ENCODE measurements at regions of chr20 and their contacts with region 1.

Region 1: DNA sequence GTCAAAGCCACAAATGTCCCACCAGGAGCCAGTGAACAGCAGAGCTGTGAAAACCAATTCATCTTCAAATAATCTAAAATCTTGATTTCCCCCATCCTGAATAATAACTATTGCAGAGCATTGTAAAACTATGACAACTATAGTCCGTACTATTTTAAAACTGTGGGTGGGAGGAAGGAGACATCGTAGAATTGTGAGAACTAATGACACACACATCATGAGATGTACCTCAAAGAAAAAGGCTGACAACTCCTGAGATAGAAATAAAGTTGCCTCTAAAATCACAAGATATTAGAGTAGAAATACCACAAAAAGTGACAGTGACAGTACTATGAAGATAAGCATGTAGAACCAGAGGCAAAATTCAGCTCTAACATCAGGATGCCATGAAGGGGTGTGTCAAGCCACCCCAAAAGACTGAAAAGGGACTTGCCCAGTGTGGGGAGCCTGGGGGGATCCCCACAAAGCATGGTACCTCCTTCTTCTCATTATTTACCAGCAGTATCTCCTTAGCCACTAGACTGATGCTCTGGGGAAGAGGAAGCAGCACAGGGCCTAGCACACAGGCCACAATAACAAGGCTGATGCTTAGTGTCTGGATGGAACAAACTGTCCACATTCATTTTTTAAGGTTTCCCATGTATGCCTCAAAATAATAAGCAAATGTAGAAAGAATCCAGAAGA is 13.4 kb downstream of the NAPB start:
- DNase-seq: no peak
- ATAC-seq: no peak
- H3K4me3 ChIP-seq: no peak overlapping the region
- H3K27ac ChIP-seq: no peak overlapping the region
- H3K4me1 ChIP-seq: peaks cover 58% of the 10 kb centered on the region
- H3K27me3 ChIP-seq: no peaks in the 10 kb centered on the region
- CTCF ChIP-seq: no peak

Region 2: DNA sequence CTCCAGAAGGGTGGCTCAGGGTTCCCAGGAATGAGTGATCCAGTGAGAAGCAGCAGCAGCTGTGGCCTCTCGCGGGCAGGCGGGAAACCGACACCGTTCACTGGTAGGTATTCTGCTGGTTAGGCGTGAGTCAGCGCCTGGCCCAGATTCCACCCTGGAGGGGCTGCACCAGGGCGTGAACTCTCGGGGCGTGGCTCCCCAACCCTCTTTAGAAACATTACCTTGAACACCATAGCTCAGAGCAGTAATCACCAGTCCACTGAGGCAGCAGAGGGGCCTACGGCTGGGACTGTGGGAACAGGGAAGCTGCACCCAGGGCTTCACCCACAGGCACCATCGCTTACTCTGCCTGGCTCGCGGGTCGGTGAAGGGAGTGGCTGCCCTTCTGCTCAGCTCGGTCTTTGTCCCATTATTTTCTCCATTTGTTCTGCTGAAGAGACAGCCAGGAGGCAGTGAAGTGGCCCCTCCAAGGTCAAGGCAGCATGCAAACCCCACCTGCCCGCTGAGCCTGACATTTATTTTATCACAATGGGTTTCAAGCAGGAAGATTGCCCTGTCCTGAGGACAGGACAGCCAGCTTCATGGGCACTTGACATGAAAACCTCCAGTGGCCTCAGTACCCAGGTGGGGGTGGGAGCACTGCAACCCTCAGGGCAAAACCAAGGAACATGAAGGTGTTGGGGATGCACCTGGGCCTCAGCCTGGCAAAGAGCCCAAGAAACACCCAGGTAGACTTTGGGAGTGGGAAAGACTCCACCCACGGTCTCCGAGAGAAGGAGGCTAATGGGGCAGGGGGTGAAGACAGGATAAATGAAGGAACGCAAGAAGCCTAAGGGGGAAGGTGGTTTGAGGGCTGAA is 270.8 kb before region 1 on chr20:
- intact Hi-C with region 1: loop called in 1 of 2 experiments (anchors 5 kb)
- DNase-seq: peak; percentile 89 to 97
- ATAC-seq: peak; percentile 96 to 98 (median 98)
- H3K4me3 ChIP-seq: peak overlapping the region; percentile 30
- H3K27ac ChIP-seq: peak overlapping the region; percentile 91
- H3K4me1 ChIP-seq: peaks cover 59% of the 10 kb centered on the region
- H3K27me3 ChIP-seq: no peaks in the 10 kb centered on the region
- CTCF ChIP-seq: no peak

Region 3: DNA sequence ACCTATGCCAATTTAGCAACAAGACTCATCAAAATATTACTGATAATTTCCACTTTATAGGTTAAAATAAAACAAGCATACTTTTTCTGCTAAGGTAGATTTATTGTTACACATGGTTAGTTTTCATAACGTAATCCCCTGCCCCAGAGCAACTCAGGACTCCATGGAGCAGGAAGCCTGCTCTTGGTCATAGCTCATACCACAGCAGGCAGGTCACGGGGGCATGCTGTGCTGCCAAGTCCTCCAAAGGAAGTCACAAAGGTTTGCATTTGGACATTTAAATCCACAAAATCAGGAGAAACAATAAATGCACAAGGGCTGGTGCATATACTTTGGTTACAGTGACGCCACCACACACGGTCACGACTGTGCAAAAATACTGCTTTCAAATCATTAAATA is 33.5 kb before region 1 on chr20:
- intact Hi-C with region 1: loop called in 1 of 2 experiments (anchors 5 kb)
- DNase-seq: no peak
- ATAC-seq: no peak
- H3K4me3 ChIP-seq: no peak overlapping the region
- H3K27ac ChIP-seq: no peak overlapping the region
- H3K4me1 ChIP-seq: peaks cover 13% of the 10 kb centered on the region
- H3K27me3 ChIP-seq: no peaks in the 10 kb centered on the region
- CTCF ChIP-seq: no peak

Measured in psoas muscle (tissue), 8 donors.